GM10248 (cell line): ENCODE measurements at regions of chr9 and their contacts with region 1.

Region 1: GRCh38 chr9:70111042-70111602 is 67.5 kb downstream of the MAMDC2 start:
- DNase-seq: peak; percentile 39
- CTCF ChIP-seq: peak; percentile 94

Region 2: GRCh38 chr9:69292084-69292483 is 819.0 kb before region 1 on chr9:
- CTCF ChIA-PET with region 1: no interaction called
- POLR2A ChIA-PET with region 1: no interaction called
- DNase-seq: no peak
- CTCF ChIP-seq: no peak

Region 3: GRCh38 chr9:69421908-69422801 is 689.0 kb before region 1 on chr9:
- CTCF ChIA-PET with region 1: interaction called, 49 read pairs
- POLR2A ChIA-PET with region 1: no interaction called
- DNase-seq: peak; percentile 76
- CTCF ChIP-seq: peak; percentile 84

Region 4: DNA sequence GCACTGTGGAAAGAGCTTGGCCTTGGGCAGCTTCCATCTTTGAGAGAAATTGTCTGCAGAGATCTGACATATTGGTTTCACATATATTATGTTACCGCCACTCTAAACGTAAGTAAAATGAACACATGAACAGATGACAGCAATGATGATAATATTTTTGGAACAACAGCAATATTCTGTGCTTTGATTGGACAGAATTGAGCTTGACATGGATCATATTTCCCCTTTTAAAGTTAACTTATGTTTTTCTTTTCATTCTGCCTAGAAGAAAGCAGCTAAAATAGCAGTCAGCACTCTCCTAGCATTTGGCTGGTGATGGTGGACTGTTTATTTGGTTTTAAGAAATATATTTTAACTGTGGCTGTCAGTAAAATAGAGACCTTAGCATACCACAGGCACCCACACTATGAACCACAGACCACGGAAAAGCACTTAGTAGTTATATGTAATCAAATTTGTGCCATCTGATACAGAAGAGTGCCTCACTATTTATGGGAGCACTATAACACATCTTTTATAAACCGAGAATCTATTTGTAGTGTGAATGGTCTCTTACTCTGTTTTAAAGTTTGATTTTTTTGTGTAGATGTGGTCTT is 292.3 kb before region 1 on chr9:
- CTCF ChIA-PET with region 1: no interaction called
- POLR2A ChIA-PET with region 1: no interaction called
- DNase-seq: no peak
- CTCF ChIP-seq: no peak

Region 5: GRCh38 chr9:69871118-69871834 is 239.8 kb before region 1 on chr9:
- CTCF ChIA-PET with region 1: no interaction called
- POLR2A ChIA-PET with region 1: no interaction called
- DNase-seq: no peak
- CTCF ChIP-seq: no peak

Region 6: DNA sequence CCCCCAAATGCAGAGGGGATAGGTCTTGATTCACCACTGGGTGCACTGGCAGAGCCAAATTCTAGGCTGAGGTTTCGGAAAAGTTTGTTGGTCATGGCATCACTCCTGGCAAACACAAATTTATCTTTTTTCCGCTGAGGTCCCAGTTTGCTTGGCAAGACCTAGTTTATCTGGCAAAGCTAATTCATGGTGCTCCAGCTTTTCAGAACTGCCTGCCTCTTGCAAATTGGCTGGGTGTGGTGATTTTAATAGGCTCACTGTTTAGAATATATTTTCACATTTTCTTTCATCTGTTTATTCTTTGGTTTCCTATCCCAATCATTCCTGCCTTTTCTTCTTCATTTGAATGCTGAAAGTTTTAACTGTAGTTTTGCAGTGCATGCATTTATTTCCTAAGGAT is 118.0 kb before region 1 on chr9:
- CTCF ChIA-PET with region 1: interaction called, 10 read pairs
- POLR2A ChIA-PET with region 1: no interaction called
- DNase-seq: no peak
- CTCF ChIP-seq: no peak

Region 7: DNA sequence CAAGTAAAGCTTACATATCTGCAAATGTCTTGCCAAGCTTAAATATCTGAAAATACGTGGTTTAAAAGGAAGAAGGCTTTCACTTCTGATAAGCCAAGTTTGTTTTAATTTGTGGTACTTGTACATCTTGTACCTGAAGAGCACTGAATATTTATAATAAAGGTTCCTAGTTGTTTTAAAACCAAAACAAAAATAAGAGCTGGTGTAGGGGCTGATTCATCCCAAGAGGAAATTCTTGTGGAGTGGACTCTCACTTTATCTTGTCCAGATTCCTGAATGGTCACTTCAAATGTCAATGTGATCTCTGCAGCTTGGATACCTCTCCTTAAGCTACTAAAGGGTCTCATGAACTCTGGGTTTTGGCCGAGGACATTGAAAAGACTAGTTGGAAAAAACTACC is 37.9 kb before region 1 on chr9:
- CTCF ChIA-PET with region 1: interaction called, 10 read pairs
- POLR2A ChIA-PET with region 1: no interaction called
- DNase-seq: no peak
- CTCF ChIP-seq: no peak

Region 8: GRCh38 chr9:70100362-70100761 is 10.8 kb before region 1 on chr9:
- CTCF ChIA-PET with region 1: interaction called, 25 read pairs
- POLR2A ChIA-PET with region 1: no interaction called
- DNase-seq: no peak
- CTCF ChIP-seq: no peak

Region 9: GRCh38 chr9:70602321-70603019 is 491.3 kb after region 1 on chr9:
- CTCF ChIA-PET with region 1: interaction called, 16 read pairs
- POLR2A ChIA-PET with region 1: no interaction called
- DNase-seq: peak; percentile 54
- CTCF ChIP-seq: peak; percentile 67